PC-3 (cell line): ENCODE measurements at regions of chr10 and their contacts with region 1.

Region 1: DNA sequence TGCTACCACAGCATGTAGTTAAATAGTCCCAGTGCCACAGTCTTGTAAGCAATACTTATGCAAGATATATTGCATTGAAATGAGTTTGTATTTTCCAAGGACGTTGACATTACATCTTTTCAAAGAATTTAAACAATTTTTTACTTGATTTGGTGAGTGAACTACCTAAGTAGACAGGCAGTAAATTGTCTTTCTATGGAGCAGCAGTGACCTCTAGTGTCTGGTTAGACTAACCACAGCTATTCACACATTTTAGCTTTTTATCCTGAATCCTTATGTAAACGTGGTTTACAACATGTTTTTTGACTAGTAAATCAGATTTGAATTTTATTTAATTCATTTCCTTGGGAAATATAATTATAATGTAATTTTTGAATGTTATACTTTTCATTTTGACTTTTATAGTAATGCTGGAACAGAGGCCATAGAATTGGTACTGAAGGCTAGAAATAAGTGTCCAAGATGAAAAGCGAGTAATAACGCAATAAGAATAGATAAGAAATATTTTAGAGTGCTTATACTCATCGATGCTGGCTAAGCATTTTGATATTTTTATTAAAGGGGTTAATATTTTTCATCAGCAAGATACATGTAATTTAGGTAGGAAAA is 5.6 kb downstream of the LRRTM3 start:
- DNase-seq: peak; percentile 97
- ATAC-seq: peak; percentile 78
- H3K4me3 ChIP-seq: no peak overlapping the region
- H3K27ac ChIP-seq: no peak overlapping the region
- H3K4me1 ChIP-seq: peaks cover 3% of the 10 kb centered on the region; the same call in 1 of the 2 replicates
- H3K27me3 ChIP-seq: peaks cover 33% of the 10 kb centered on the region
- CTCF ChIP-seq: peak; percentile 100

Region 2: DNA sequence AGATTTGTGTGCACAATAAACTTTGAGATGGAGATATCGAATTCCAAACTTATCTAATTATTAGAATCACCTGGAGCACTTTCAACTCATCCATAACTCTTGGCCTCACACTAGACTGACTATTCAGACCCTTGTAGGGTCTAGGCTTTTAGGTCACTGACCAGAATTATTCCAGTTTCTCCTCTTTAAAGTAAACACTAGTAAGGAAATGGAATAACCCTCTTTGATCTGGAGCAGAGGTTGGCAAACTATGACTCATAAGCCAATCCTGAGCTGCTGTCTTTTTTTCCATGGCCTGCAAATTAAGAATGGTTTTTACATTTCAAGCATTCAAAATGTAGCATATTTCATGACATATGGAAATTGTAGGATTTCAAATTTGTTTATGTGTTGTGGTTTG is 1808.3 kb before region 1 on chr10:
- CTCF ChIA-PET with region 1: no interaction called
- POLR2A ChIA-PET with region 1: no interaction called
- intact Hi-C with region 1: loop called (anchors 10 kb)
- DNase-seq: peak; percentile 86
- ATAC-seq: peak; percentile 96
- H3K4me3 ChIP-seq: no peak overlapping the region
- H3K27ac ChIP-seq: peak overlapping the region; percentile 44
- H3K4me1 ChIP-seq: peaks cover 17% of the 10 kb centered on the region
- H3K27me3 ChIP-seq: no peaks in the 10 kb centered on the region
- CTCF ChIP-seq: no peak

Region 3: DNA sequence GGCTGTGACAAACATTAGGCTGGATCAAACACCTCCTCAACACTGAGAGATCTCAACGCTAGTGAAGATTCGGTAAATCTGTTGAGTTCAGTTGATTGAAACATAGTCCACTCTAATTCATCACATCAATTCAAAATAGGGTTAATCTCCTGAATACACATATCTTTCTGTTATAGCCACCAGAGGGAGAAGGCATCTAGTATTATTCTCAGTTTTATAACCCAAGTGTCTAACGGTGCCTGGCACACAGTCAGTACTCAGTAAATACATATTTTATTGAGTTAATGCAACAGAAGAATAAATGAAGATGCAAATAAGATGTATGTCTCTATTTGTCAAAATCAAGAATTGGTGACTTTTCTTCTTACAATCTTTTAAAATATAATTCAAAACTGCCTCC is 819.4 kb before region 1 on chr10:
- CTCF ChIA-PET with region 1: no interaction called
- POLR2A ChIA-PET with region 1: no interaction called
- intact Hi-C with region 1: loop called (anchors 5 kb)
- DNase-seq: peak; percentile 33
- ATAC-seq: peak; percentile 43
- H3K4me3 ChIP-seq: no peak overlapping the region
- H3K27ac ChIP-seq: no peak overlapping the region
- H3K4me1 ChIP-seq: no peaks in the 10 kb centered on the region
- H3K27me3 ChIP-seq: no peaks in the 10 kb centered on the region
- CTCF ChIP-seq: peak; percentile 59

Region 4: GRCh38 chr10:66180581-66181318 is 750.7 kb before region 1 on chr10:
- CTCF ChIA-PET with region 1: no interaction called
- POLR2A ChIA-PET with region 1: no interaction called
- intact Hi-C with region 1: loop called (anchors 5 kb)
- DNase-seq: peak; percentile 93
- ATAC-seq: peak; percentile 74
- H3K4me3 ChIP-seq: no peak overlapping the region
- H3K27ac ChIP-seq: no peak overlapping the region
- H3K4me1 ChIP-seq: no peaks in the 10 kb centered on the region
- H3K27me3 ChIP-seq: no peaks in the 10 kb centered on the region
- CTCF ChIP-seq: peak; percentile 95

Region 5: DNA sequence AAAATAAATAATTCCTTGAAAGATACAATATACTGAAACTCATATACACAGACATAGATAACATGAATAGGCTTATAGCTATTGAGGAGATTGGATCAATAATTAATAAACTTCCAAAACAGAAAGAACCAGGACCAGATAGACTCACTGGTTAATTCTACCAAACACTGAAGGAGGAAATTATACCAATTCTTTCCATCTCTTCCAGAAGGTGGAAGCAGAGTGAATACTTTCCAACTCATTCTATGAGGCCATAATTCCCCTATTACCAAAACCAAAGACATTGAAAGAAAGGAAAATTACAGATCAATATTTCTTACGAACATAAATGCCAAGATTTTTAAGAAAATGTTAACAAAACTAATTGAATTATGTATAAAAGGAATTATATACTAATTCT is 630.4 kb before region 1 on chr10:
- CTCF ChIA-PET with region 1: no interaction called
- POLR2A ChIA-PET with region 1: no interaction called
- intact Hi-C with region 1: loop called (anchors 1 kb)
- DNase-seq: peak; percentile 57
- ATAC-seq: peak; percentile 71; the same call in 1 of the 2 replicates
- H3K4me3 ChIP-seq: no peak overlapping the region
- H3K27ac ChIP-seq: no peak overlapping the region
- H3K4me1 ChIP-seq: no peaks in the 10 kb centered on the region
- H3K27me3 ChIP-seq: no peaks in the 10 kb centered on the region
- CTCF ChIP-seq: peak; percentile 62

Region 6: DNA sequence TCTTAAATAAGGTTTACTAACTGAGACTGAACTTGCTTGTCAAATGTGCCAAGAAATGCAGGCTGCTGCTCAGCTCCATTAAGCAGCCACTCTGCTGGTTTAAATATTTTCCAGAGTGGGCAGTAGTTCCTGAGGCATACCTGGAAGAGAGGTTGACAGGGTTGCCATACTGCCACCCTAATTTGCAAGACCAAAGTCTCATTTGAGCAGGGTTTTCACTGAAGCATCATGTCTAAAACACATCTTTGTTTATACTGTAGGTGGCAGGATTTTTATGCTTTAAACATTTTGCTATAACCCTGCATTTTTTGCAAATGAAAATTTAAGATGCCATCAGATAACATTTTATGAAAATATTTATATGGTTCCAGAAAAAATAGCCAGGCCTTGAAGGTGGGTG is 623.6 kb before region 1 on chr10:
- CTCF ChIA-PET with region 1: interaction called, 4 read pairs
- POLR2A ChIA-PET with region 1: no interaction called
- intact Hi-C with region 1: loop called (anchors 1 kb)
- DNase-seq: peak; percentile 78
- ATAC-seq: peak; percentile 87
- H3K4me3 ChIP-seq: no peak overlapping the region
- H3K27ac ChIP-seq: no peak overlapping the region
- H3K4me1 ChIP-seq: no peaks in the 10 kb centered on the region
- H3K27me3 ChIP-seq: no peaks in the 10 kb centered on the region
- CTCF ChIP-seq: peak; percentile 91